Activated naive CD4-positive, alpha-beta T cell treated with anti-CD3 and anti-CD28 coated beads for 36 hours (primary cell): ENCODE measurements at regions of chr13 and their contacts with region 1.

Region 1: GRCh38 chr13:32538621-32539246 is at the start of gene N4BP2L2:
- DNase-seq: peak; percentile 96
- H3K4me3 Mint-ChIP-seq: peak within 1 kb of the TSS; percentile 97
- H3K27ac Mint-ChIP-seq: peak within 1 kb of the TSS; percentile 99
- H3K4me1 Mint-ChIP-seq: peaks cover 37% of the 10 kb centered on the region
- H3K27me3 Mint-ChIP-seq: no peaks in the 10 kb centered on the region
- total RNA-seq, gene N4BP2L2: 81.1 to 82.3 TPM

Region 2: DNA sequence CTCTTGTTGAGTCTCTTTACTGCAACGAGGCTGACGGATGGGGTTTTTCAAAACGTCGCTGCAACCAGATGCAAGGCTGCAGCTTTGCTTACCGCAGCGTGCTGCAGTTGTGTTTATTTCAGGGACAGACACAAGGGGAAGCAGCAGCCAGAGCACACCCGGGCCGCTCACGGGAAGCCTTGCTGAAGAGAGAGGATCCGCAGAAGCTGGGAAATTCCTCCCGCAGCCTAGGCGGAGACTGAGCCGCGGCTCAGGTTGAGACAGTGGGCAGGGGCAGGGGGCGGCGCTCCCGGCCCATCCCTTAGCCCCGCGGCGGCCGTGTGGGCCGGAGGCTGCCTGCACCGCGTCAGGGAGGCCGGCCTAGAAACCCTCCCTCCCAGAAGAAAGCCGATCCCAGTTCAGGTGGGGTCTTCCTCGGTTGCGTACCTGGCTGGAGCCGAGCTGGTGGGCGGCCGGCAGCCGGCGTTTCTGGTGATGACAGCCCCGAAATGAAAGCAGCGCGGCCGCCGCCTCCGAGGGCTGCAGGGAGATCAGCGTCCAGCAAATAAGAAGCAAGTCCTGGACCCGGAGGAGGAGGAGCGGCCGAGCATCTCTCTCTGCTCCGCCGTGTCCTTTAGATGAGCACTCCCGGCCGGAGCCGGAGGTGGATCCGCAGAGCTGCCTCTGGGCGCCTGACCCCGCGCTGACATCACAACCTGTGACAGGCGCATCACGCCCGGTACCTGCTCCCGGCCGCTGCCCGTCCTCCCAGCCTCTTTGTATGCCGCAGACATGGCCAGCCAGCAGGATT is 507.5 kb before region 1 on chr13 and contains the start of gene FRY:
- CTCF ChIA-PET with region 1: no interaction called
- intact Hi-C with region 1: loop called (anchors 5 kb)
- DNase-seq: peak; percentile 72
- H3K4me3 Mint-ChIP-seq: peak within 1 kb of the TSS; percentile 85
- H3K27ac Mint-ChIP-seq: peak within 1 kb of the TSS; percentile 68
- H3K4me1 Mint-ChIP-seq: peaks cover 45% of the 10 kb centered on the region
- H3K27me3 Mint-ChIP-seq: peaks cover 9% of the 10 kb centered on the region
- total RNA-seq, gene FRY: 7.3 to 7.8 TPM

Region 3: GRCh38 chr13:32315238-32316027 is 223.3 kb before region 1 on chr13 and contains the starts of genes BRCA2 and ZAR1L:
- CTCF ChIA-PET with region 1: interaction called, 5 read pairs
- intact Hi-C with region 1: loop called (anchors 1 kb)
- DNase-seq: peak; percentile 91
- H3K4me3 Mint-ChIP-seq: peak within 1 kb of the TSS; percentile 92
- H3K27ac Mint-ChIP-seq: peak within 1 kb of the TSS; percentile 98
- H3K4me1 Mint-ChIP-seq: peaks cover 12% of the 10 kb centered on the region
- H3K27me3 Mint-ChIP-seq: no peaks in the 10 kb centered on the region
- total RNA-seq, gene BRCA2: 17.3 to 21.3 TPM
- total RNA-seq, gene ZAR1L: not detected

Region 4: DNA sequence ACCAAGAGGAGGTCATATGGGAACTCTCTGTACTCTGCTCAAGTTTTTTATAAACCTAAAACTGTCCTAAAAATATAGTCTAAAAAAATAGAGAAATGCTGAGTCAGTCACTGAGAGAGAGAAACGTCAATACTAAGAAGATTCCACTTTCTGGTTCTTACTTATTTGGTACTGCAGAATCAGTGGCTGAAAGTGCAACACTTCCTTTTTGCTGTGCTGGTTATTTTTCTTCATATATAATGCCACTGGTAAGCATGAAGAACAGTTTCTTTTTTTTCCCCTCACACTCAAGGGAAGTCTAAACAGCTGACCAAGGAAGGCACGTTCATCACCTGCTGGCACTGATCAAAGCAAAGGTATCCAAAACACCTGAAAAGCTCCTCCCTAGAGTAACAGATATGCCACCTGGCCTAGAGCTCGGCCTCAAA is 66.5 kb before region 1 on chr13:
- CTCF ChIA-PET with region 1: no interaction called
- intact Hi-C with region 1: loop called (anchors 1 kb)
- DNase-seq: no peak
- H3K4me3 Mint-ChIP-seq: no peak overlapping the region
- H3K27ac Mint-ChIP-seq: no peak overlapping the region
- H3K4me1 Mint-ChIP-seq: peaks cover 3% of the 10 kb centered on the region
- H3K27me3 Mint-ChIP-seq: no peaks in the 10 kb centered on the region

Region 5: GRCh38 chr13:32586080-32586900 is 47.6 kb after region 1 on chr13 and contains the start of gene PDS5B:
- CTCF ChIA-PET with region 1: interaction called, 14 read pairs
- intact Hi-C with region 1: loop called (anchors 1 kb)
- DNase-seq: peak; percentile 95
- H3K4me3 Mint-ChIP-seq: peak within 1 kb of the TSS; percentile 95
- H3K27ac Mint-ChIP-seq: peak within 1 kb of the TSS; percentile 91
- H3K4me1 Mint-ChIP-seq: peaks cover 36% of the 10 kb centered on the region
- H3K27me3 Mint-ChIP-seq: no peaks in the 10 kb centered on the region
- total RNA-seq, gene PDS5B: 48.0 to 51.6 TPM

Region 6: DNA sequence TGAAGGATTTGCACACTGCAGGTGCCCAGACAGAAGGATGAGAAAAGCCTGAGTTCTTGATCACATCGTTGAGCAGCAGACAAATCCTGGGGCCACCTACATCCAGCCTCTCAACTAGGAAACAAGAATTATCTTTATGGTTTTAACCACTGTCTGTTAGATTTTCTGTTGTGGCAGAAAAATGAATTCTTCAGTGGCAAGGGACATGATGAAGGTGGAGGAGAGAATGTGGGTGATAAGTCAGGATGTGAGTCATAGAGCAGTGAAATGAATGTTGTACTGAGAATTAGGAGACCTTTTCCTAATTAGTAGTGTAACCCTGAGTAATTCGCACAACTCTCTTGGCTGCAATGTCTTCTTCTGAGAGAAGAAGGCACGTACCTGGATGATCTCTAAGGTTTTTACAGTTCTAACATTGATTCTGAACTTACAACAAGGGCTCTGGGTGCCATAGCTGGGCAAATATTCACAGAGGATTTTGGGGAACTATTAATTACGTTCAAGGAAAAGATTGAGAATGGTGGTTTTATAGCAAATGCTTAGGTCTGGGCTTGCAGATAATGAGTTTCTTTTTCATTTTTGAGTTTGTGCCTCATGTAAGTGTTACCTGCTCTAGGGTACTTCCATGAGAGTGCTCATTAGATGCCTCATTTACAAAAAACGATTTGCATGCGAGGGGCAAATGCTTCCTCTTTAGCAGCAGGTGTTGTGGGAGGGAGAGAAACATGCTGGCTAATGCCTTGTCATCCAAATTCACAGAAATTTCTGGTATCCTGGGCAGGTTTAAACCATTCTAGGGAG is 366.5 kb after region 1 on chr13:
- CTCF ChIA-PET with region 1: no interaction called
- intact Hi-C with region 1: loop called (anchors 1 kb)
- DNase-seq: peak; percentile 54
- H3K4me3 Mint-ChIP-seq: peak overlapping the region; percentile 51
- H3K27ac Mint-ChIP-seq: peak overlapping the region; percentile 86
- H3K4me1 Mint-ChIP-seq: peaks cover 29% of the 10 kb centered on the region
- H3K27me3 Mint-ChIP-seq: no peaks in the 10 kb centered on the region